Thyroid gland (tissue), 4 donors: ENCODE measurements at regions of chr19 and their contacts with region 1.

Region 1: DNA sequence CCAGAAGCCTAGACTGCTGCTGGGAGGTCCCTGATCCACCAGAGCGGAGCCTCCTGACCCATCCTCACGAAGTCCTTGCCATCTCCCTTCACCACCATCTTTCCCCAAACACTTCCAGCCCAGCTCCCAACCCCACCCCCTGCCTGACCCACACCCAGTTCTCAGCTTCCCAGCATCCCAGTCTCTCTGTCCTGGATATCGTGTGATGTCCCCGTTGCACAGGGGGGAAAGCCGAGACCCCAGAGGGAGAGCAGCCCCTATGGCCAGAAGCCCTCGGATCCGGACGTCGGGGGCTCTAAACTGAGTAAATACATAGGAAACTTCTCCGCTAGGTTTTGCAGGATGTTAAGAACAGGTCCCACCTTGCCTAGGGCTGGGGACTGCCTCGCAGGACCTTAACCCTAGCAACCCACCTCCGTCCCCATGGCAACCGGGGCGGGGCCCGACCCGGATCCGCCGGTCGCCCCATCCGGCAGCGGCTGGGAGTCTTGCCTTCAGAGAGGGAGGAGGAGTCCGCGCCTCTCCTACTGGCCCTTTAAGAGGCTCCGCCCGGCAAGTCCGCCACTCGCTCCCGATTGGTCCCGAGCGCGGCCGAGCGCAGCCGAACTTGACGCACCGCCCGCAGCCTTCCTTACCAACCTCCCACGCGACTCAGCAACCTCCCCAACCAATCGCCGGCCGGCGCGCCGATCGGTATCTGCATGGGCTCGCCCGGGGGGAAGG is 451 bp upstream of the HMG20B start:
- DNase-seq: peak; percentile 100
- H3K4me3 ChIP-seq: peak overlapping the region in 1 of 3 donors; percentile 85
- H3K27ac ChIP-seq: no peak overlapping the region
- H3K4me1 ChIP-seq: peaks cover 19 to 20% of the 10 kb centered on the region in 2 donors
- H3K27me3 ChIP-seq: no peaks in the 10 kb centered on the region
- CTCF ChIP-seq: no peak
- POLR2A ChIP-seq: no peak

Region 2: GRCh38 chr19:3516675-3517207 is 55.6 kb before region 1 on chr19:
- intact Hi-C with region 1: no loop called
- DNase-seq: peak in 1 of 2 donors; percentile 16
- H3K4me3 ChIP-seq: no peak overlapping the region
- H3K27ac ChIP-seq: no peak overlapping the region
- H3K4me1 ChIP-seq: peaks cover 0 to 9% of the 10 kb centered on the region in 2 donors
- H3K27me3 ChIP-seq: no peaks in the 10 kb centered on the region
- CTCF ChIP-seq: no peak
- POLR2A ChIP-seq: no peak

Region 3: DNA sequence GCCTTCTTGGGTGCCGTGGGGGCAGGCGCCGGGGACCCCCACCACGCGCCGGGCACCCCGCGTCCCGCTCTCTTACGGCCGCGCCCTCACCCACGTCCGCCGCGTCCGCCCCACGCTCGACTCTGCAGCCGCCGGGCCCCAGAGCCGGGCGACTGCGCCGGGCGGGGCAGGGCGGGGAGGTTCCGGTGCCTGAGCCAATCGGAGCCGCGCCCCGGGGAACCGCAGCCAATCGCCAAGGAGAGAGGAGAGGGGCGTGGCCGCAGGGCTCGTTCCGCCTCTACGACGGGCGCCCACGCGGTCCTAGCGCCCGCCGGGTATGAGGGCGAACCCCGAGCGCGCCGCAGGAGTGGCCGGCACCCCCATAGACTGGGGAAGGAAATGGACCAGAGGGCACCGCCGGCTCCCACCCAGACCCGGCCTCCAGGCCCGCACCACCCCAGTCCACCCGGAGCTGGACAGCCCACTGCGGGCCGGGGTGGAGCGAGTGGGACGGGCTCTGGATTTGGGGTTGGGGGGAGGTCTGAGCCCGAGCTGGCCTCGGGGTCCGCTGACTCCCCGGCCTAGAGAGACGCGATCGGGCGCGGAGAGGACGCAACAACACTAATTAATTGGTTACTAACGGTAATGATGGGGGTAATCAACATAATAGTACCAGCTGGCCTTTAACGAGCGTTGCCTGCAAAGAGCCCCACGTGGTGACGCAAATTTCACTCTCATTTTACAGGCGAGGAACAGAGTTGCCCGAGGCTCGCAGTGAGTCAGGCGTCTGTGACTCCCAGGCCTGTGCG is 14.6 kb before region 1 on chr19 and contains the start of gene MFSD12:
- intact Hi-C with region 1: loop called (anchors 2 kb)
- DNase-seq: peak; percentile 95
- H3K4me3 ChIP-seq: peak within 1 kb of the TSS; percentile 74 to 86 (median 76)
- H3K27ac ChIP-seq: peak within 1 kb of the TSS; percentile 46 to 65 (median 55)
- H3K4me1 ChIP-seq: peaks cover 7 to 20% of the 10 kb centered on the region in 2 donors
- H3K27me3 ChIP-seq: no peaks in the 10 kb centered on the region
- CTCF ChIP-seq: no peak
- POLR2A ChIP-seq: peak in 1 of 2 donors; percentile 85
- total RNA-seq, gene MFSD12: 36.4 to 90.9 (median 66.7) TPM

Region 4: GRCh38 chr19:3626473-3627350 is 54.4 kb after region 1 on chr19 and contains the start of gene CACTIN:
- intact Hi-C with region 1: loop called (anchors 5 kb)
- DNase-seq: peak; percentile 99 to 100
- H3K4me3 ChIP-seq: peak within 1 kb of the TSS; percentile 72 to 88 (median 73)
- H3K27ac ChIP-seq: peak within 1 kb of the TSS; percentile 92 to 96 (median 96)
- H3K4me1 ChIP-seq: peaks cover 15 to 18% of the 10 kb centered on the region in 2 donors
- H3K27me3 ChIP-seq: no peaks in the 10 kb centered on the region
- CTCF ChIP-seq: peak in 1 of 6 experiments; percentile 20
- POLR2A ChIP-seq: peak in 1 of 2 donors; percentile 76
- total RNA-seq, gene CACTIN: 18.8 to 30.6 (median 24.5) TPM

Region 5: DNA sequence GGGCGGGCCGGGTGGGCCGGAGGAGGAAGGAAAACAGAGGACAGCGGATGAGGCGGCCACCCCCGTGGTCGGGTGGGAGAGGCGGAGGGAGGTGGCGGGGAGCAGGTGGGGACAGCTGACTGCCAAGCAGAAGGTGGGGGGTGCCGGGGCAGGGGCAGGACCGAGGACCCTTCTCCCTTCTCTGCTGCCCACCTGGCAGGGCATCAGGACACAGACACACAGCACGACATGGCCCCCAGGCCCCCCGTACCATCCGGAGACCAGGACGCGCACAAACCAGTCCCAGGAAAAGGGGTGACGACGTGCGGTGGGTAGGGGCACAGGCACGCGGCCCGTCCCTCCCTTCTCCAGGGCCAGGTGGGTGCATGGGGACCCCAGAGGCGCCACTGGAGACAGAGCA is 65.3 kb after region 1 on chr19:
- intact Hi-C with region 1: no loop called
- DNase-seq: no peak
- H3K4me3 ChIP-seq: no peak overlapping the region
- H3K27ac ChIP-seq: no peak overlapping the region
- H3K4me1 ChIP-seq: no peaks in the 10 kb centered on the region
- H3K27me3 ChIP-seq: no peaks in the 10 kb centered on the region
- CTCF ChIP-seq: no peak
- POLR2A ChIP-seq: no peak